HEK293T (cell line): ENCODE measurements at regions of chr9 and their contacts with region 1.

Region 1: DNA sequence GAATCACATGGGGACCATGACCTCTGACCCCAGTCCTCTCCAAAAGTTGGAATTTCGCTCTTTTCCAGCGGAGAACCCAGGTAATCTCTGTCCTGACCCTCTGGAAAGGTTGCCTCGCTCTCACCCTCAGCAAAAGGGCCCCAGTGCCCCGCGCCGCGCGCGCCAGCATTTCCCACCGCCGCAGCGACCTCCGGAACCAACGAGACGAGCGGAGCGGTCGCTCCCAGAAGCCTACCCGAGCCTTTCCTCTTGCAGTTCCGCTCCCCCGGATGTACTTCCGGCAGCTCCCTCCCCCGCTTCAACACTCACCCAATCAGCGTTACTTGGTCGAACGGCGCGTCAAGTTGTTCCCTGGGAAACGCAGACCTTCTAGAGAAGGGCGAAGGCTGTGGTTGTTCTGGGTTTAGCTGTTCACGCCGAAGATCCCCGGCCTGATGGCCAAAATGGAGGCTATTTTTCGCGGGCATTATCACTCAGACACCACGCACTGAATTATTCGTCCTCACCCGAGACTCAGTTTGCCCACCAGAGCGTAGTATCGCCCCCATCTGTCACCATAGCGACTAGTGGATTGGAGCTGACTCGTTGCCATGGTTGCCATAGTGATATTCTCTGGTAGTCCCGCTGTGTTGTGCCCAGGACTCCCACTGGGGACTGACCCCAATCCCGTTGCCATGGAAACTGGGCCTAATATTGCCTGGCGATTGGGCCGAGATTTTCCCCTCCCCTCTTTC is at the start of gene STOML2:
- DNase-seq: peak; percentile 92

Region 2: GRCh38 chr9:34907044-34907443 is 196.0 kb before region 1 on chr9:
- CTCF ChIA-PET with region 1: no interaction called
- POLR2A ChIA-PET with region 1: no interaction called
- DNase-seq: no peak

Region 3: DNA sequence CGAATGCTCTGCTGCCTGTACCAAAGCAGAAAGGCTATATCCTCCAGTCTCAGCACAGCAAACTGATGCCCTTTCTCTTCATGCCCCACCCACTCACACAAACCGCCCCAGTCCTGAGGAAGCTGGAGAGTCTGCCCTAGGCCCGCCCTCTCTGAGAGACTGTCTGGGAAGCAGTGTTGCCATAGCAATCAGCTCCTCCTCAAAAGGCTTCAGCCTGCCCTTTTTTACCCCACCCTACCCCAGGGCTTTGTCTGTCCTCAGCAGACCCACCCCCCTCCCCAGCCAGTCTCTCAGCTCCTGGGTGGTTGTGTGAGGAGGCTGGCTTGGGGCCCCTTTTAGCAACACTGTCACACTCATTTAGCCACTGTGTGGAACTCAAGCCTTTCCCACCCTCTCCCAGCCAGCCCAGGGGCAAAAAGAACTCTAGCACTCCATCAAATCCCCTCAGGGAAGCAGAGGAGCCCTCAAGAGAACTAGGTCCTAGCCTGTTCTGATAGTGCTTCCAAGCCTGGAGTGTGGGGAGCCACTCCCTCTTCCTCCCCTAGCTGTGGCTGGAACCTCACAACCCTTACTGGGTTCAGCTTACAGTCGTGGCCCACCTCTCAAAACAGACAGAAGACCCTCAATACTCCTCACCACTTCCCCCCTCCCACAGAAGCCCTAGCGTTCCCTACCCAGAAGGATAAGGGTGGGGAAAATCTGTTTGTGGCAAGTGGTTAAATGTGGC is 11.2 kb after region 1 on chr9:
- CTCF ChIA-PET with region 1: interaction called, 4 read pairs
- POLR2A ChIA-PET with region 1: interaction called, 11 read pairs
- DNase-seq: peak; percentile 43

Region 4: DNA sequence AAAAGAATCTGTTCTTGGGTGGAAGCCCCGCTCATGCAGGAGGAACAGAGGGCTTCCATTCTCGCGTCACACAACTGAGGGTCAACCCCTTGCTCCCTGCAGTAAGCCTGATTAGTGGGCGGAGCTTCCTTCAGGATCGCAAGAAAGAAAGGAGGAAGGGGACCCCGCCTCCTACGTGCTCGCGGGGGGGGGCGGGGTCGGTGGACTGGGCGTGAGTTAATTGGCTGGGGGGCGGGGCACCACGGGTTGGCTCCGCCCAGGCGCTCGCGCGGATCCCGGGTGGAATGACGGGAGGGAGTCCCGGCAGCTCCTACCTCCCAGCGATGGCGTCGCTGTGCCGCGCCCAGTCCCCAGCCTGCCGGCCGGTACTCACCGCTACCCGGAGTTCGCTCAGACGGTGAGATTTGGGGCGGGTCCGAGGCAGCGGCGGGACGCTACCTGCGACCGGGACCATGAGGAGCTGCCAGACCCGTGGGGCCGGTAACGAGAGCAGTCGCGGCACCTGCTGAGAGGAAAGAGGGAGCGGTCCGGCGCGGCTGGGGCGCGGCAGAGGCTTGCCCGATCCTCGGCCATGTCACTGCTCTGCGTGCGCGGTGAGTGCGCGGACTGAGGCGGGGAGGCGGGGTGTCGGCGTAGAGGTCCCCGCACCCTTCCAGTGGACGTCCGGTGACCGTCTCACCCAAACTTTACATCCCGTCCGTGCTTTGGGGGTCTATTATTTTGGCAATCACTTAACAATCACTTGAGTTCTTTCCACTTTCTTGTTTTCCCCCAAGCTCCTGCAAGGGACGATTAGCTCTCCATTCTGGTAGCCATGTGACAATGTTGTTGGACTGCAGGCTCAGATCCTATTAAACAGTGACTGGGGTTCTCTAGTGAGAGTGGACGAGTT is 58.9 kb after region 1 on chr9 and contains the start of gene UNC13B:
- CTCF ChIA-PET with region 1: no interaction called
- POLR2A ChIA-PET with region 1: no interaction called
- DNase-seq: peak; percentile 97

Region 5: GRCh38 chr9:36891341-36891959 is 1788.4 kb after region 1 on chr9:
- CTCF ChIA-PET with region 1: no interaction called
- POLR2A ChIA-PET with region 1: no interaction called
- DNase-seq: no peak